Left ventricle myocardium inferior (tissue), 1 donor: ENCODE measurements at regions of chr12 and their contacts with region 1.

Region 1: GRCh38 chr12:52884526-52885293 is 20.2 kb downstream of the KRT8 start:
- DNase-seq: peak; percentile 78
- H3K4me3 ChIP-seq: no peak overlapping the region
- H3K27ac ChIP-seq: no peak overlapping the region
- H3K4me1 ChIP-seq: peaks cover 6% of the 10 kb centered on the region
- H3K27me3 ChIP-seq: peaks cover 23% of the 10 kb centered on the region
- CTCF ChIP-seq: peak; percentile 97

Region 2: GRCh38 chr12:52980693-52981423 is 96.1 kb after region 1 on chr12:
- intact Hi-C with region 1: loop called (anchors 2 kb)
- DNase-seq: peak; percentile 84
- H3K4me3 ChIP-seq: no peak overlapping the region
- H3K27ac ChIP-seq: no peak overlapping the region
- H3K4me1 ChIP-seq: no peaks in the 10 kb centered on the region
- H3K27me3 ChIP-seq: peaks cover 66% of the 10 kb centered on the region
- CTCF ChIP-seq: peak; percentile 98